H1 (cell line): ENCODE measurements at regions of chr6 and their contacts with region 1.

Region 1: DNA sequence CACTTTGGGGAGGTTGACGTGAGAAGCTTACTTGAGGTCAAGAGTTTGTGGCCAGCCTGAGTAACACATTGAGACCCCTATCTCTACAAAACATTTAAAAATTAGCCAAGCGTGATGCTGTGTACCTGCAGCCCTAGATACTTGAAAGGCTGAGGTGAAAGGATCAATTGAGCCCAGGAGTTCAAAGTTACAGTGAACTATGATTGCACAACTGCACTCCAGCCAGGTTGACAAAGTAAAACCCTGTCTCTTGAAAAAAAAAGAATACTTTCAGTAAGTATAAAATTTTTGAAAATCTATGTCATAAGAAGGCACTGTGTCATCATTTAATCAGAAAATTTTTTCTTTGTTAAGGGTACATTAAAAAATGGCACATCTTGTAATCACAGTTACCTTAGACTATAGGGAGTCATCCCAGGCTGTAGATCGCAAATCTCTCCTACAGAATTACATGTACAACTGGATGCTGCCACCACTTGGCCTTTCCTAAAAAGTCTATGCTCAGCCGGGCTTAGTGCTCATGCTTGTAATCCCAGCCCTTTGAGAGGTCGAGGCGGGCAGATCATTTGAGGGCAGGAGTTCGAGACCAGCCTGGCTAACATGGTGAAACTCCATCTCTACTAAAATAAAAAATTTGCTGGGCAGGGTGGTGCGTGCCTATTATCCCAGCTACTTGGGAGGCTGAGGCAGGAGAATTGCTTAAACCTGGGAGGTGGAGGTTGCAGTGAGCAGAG is 17.0 kb upstream of the MRS2 start:
- DNase-seq: no peak
- H3K4me3 ChIP-seq: no peak overlapping the region
- H3K27ac ChIP-seq: no peak overlapping the region
- H3K4me1 ChIP-seq: no peaks in the 10 kb centered on the region
- H3K27me3 ChIP-seq: no peaks in the 10 kb centered on the region
- CTCF ChIP-seq: no peak
- EP300 ChIP-seq: no peak
- POLR2A ChIP-seq: no peak
- RAD21 ChIP-seq: no peak

Region 2: GRCh38 chr6:24255676-24256075 is 130.0 kb before region 1 on chr6:
- CTCF ChIA-PET with region 1: interaction called, 14 read pairs
- POLR2A ChIA-PET with region 1: no interaction called
- DNase-seq: no peak
- H3K4me3 ChIP-seq: no peak overlapping the region
- H3K27ac ChIP-seq: no peak overlapping the region
- H3K4me1 ChIP-seq: peaks cover 2 to 12% (median 8%) of the 10 kb centered on the region in 4 experiments; a peak in 6 of 7 replicates
- H3K27me3 ChIP-seq: no peaks in the 10 kb centered on the region
- CTCF ChIP-seq: no peak
- EP300 ChIP-seq: no peak
- POLR2A ChIP-seq: no peak
- RAD21 ChIP-seq: no peak

Region 3: GRCh38 chr6:24283043-24283985 is 102.4 kb before region 1 on chr6:
- CTCF ChIA-PET with region 1: interaction called, 61 read pairs
- POLR2A ChIA-PET with region 1: no interaction called
- DNase-seq: peak in 1 of 2 experiments; percentile 34
- H3K4me3 ChIP-seq: peak overlapping the region in 1 of 4 experiments; percentile 49; a peak in 2 of 8 replicates
- H3K27ac ChIP-seq: no peak overlapping the region
- H3K4me1 ChIP-seq: peaks cover 0 to 7% (median 0%) of the 10 kb centered on the region in 4 experiments; a peak in 1 of 7 replicates
- H3K27me3 ChIP-seq: no peaks in the 10 kb centered on the region
- CTCF ChIP-seq: peak; percentile 59 to 64 (median 62)
- EP300 ChIP-seq: no peak
- POLR2A ChIP-seq: no peak
- RAD21 ChIP-seq: peak; percentile 47

Region 4: DNA sequence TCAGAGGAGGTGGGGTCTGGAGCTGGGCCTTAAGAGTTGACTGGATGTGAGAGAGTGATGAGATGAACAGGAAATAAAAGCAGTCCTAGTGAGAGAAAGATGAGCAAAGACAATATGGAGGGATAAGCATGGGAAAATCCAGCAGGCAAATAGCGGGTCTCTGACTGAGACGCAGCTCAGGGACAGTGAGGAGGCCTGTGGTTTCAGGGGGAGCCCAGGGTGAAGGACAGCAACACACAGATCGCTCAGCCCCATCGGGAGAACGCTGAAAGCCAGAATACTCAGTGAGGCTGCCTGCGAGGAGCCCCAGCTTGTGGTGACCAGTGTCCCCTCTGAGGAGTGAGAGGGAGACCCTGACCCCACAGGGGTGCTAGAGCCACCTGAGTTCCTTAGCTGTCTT is 11.1 kb before region 1 on chr6:
- CTCF ChIA-PET with region 1: interaction called, 13 read pairs
- POLR2A ChIA-PET with region 1: interaction called, 3 read pairs
- DNase-seq: no peak
- H3K4me3 ChIP-seq: no peak overlapping the region
- H3K27ac ChIP-seq: no peak overlapping the region
- H3K4me1 ChIP-seq: no peaks in the 10 kb centered on the region
- H3K27me3 ChIP-seq: no peaks in the 10 kb centered on the region
- CTCF ChIP-seq: no peak
- EP300 ChIP-seq: no peak
- POLR2A ChIP-seq: no peak
- RAD21 ChIP-seq: no peak

Region 5: DNA sequence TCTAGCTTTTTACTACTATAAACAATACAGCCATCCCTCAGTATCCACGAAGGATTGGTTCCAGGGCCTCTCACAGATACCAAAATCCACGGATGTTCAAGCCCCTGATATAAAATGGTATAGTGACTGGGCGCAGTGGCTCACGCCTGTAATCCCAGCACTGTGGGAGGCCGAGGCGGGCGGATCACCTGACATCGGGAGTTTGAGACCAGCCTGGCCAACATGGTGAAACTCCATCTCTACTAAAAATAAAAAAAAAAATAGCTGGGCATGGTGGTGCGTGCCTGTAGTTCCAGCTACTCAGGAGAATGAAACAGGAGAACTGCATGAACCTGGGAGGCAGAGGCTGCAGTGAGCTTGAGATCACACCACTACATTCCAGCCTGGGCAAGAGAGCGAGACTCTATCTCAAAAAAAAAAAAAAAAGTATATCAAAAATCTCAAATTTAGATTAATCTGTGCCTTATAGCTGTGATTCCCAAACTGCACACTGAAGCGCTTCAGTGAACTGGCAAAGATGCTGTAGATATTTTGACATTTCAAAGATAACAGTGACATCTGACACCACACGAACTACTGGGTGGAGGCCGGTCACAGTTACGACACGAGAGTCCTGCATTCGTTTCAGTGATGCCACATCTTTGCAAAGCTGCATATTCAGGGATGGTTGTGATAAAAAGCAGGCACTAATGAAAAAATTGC is 55.3 kb after region 1 on chr6:
- CTCF ChIA-PET with region 1: no interaction called
- POLR2A ChIA-PET with region 1: no interaction called
- DNase-seq: no peak
- H3K4me3 ChIP-seq: no peak overlapping the region
- H3K27ac ChIP-seq: no peak overlapping the region
- H3K4me1 ChIP-seq: peaks cover 0 to 4% (median 2%) of the 10 kb centered on the region in 4 experiments; a peak in 2 of 7 replicates
- H3K27me3 ChIP-seq: no peaks in the 10 kb centered on the region
- CTCF ChIP-seq: no peak
- EP300 ChIP-seq: no peak
- POLR2A ChIP-seq: no peak
- RAD21 ChIP-seq: no peak